ENCODE measurements at regions of chr22 and their contacts with region 1.

Region 1: GRCh38 chr22:35622191-35622913 is 5.2 kb upstream of the MB start:
- DNase-seq: no peak
- H3K4me3 ChIP-seq: no peak overlapping the region
- H3K4me3 Mint-ChIP-seq: no peak overlapping the region
- H3K27ac ChIP-seq: no peak overlapping the region
- H3K27ac Mint-ChIP-seq: no peak overlapping the region
- H3K4me1 ChIP-seq: peaks cover 5 to 6% of the 10 kb centered on the region in 2 donors
- H3K4me1 Mint-ChIP-seq: peaks cover 8% of the 10 kb centered on the region
- H3K27me3 ChIP-seq: peaks cover 0 to 10% of the 10 kb centered on the region in 2 donors
- H3K27me3 Mint-ChIP-seq: peaks cover 4 to 19% (median 15%) of the 10 kb centered on the region in 3 donors
- CTCF ChIP-seq: no peak

Region 2: DNA sequence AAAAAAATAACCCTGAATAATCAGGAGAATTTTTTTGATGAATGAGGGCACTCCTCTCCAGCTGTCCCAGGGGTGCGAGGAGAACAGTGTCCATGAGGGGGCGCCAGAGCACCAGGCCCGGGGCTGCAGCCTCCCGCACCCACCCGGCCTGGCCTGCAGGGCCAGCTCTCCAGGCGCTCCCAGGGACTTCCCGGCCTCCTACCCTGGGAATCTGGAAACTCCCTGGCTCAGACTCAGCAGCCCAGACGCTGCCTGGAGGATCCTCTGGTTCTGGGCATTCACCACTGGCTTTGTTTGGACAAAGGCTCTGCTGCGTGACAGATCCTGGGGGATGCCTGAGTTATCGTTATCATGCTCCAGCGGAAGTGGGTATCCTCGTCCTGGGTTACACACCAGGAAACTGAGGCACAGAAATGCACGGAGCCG is 191.4 kb before region 1 on chr22:
- intact Hi-C with region 1: loop called (anchors 5 to 10 kb)
- DNase-seq: peak; percentile 48 to 76 (median 50)
- H3K4me3 ChIP-seq: no peak overlapping the region
- H3K4me3 Mint-ChIP-seq: no peak overlapping the region
- H3K27ac ChIP-seq: no peak overlapping the region
- H3K27ac Mint-ChIP-seq: peak overlapping the region in 1 of 7 donors; percentile 40
- H3K4me1 ChIP-seq: no peaks in the 10 kb centered on the region
- H3K4me1 Mint-ChIP-seq: no peaks in the 10 kb centered on the region
- H3K27me3 ChIP-seq: no peaks in the 10 kb centered on the region
- H3K27me3 Mint-ChIP-seq: peaks cover 0 to 2% (median 0%) of the 10 kb centered on the region in 3 donors
- CTCF ChIP-seq: peak; percentile 89

Region 3: DNA sequence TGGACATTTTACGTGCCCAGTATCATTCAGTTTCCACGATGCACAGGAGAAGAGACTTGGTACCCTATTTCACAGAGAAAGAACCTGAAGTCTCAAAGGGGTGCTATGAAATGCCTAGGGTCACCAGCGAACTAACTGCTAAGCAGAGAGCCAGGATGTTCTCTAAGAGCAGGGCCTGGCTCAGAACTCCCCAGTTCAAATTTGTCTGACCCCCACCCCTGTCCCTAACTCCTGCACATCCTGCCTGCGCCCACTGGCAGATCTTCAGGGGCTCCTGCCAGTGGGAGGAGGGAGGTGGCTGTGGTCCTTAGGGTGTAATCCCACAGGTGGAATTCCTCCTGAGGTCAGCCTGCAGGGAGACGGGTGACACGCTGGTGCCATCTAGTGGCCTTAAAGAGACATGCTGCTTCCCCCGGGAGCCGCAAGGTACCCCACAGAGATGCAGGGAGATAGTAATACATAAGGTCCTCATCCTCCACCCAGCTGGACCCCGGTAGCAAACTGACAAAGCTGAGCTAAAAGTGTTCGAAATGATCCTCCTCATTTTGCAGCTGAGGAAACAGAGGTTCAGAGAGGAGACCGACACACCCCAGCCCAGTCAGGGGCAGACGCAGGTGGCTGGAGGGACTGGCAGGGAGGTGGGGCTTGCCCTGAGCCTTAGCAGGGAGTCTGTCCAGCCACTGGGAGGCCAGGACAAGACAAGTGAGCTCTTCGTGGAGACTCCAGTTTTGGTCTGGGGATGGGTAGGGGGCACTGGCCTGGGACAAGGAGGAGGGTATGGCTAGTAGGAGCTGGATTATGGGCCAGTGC is 39.3 kb before region 1 on chr22:
- intact Hi-C with region 1: loop called in 1 of 2 experiments (anchors 5 kb)
- DNase-seq: peak; percentile 43 to 66 (median 55)
- H3K4me3 ChIP-seq: no peak overlapping the region
- H3K4me3 Mint-ChIP-seq: no peak overlapping the region
- H3K27ac ChIP-seq: no peak overlapping the region
- H3K27ac Mint-ChIP-seq: peak overlapping the region in 1 of 7 donors; percentile 69
- H3K4me1 ChIP-seq: no peaks in the 10 kb centered on the region
- H3K4me1 Mint-ChIP-seq: peaks cover 3% of the 10 kb centered on the region
- H3K27me3 ChIP-seq: no peaks in the 10 kb centered on the region
- H3K27me3 Mint-ChIP-seq: peaks cover 4 to 12% (median 7%) of the 10 kb centered on the region in 3 donors
- CTCF ChIP-seq: peak; percentile 99

Region 4: DNA sequence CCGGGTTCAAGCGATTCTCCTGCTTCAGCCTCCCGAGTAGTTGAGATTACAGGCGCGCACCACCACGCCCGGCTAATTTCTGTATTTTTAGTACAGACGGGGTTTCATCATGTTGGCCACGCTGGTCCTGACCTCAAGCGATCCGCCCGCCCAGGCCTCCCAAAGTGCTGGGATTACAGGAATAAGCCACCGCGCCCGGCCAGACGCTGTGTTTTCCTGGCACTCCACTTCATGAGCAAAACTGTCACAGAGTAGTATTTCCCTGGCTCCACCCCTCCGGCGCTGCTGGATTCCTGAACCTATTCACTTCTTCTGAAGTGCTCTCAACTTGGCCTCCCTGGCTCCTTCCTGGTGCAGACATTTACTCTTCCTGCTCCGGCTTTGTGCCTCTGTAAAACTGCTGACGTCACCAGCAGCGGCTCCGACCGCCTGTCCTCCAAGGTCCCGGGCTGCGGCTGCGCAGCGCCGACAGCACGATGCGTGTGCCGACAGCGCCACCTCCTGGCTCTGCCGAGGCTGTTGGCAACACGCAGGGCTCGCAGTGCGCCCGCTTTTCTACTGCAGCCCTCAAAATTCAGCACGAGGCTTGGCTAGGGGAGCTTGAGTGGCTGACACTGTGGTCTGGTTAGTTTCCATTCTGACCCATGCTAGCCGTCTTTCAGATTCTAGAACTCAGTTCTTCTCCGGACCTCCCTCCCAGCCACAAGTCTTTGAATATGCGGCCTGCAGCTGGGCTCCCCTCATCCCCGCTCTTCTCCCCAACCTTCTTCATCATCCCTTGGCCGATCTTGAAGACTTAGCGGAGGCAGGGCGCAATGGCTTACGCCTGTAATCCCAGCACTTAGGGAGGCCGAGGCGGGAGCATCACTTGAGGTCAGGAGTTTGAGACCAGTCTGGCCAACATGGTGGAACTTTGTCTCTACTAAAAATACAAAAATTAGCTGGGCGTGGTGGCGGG is 501.6 kb after region 1 on chr22:
- intact Hi-C with region 1: loop called in 1 of 2 experiments (anchors 5 kb)
- DNase-seq: peak; percentile 96
- H3K4me3 ChIP-seq: peak overlapping the region in 2 of 3 experiments; percentile 22 to 63
- H3K4me3 Mint-ChIP-seq: peak overlapping the region; percentile 70 to 92
- H3K27ac ChIP-seq: peak overlapping the region; percentile 65 to 85
- H3K27ac Mint-ChIP-seq: peak overlapping the region; percentile 91 to 98 (median 96)
- H3K4me1 ChIP-seq: peaks cover 16 to 19% of the 10 kb centered on the region in 2 donors
- H3K4me1 Mint-ChIP-seq: peaks cover 17% of the 10 kb centered on the region
- H3K27me3 ChIP-seq: no peaks in the 10 kb centered on the region
- H3K27me3 Mint-ChIP-seq: peaks cover 6 to 11% (median 8%) of the 10 kb centered on the region in 3 donors
- CTCF ChIP-seq: peak; percentile 97